MCF 10A (cell line): ENCODE measurements at regions of chr4 and their contacts with region 1.

Region 1: GRCh38 chr4:15001869-15002658 is at the start of gene CPEB2:
- DNase-seq: peak; percentile 92
- H3K4me3 Mint-ChIP-seq: peak within 1 kb of the TSS; percentile 89
- H3K27ac Mint-ChIP-seq: peak within 1 kb of the TSS; percentile 95
- H3K4me1 Mint-ChIP-seq: peaks cover 7% of the 10 kb centered on the region
- H3K27me3 Mint-ChIP-seq: no peaks in the 10 kb centered on the region
- CTCF ChIP-seq: no peak
- total RNA-seq, gene CPEB2: 13.8 and 21.8 TPM in 2 replicates

Region 2: DNA sequence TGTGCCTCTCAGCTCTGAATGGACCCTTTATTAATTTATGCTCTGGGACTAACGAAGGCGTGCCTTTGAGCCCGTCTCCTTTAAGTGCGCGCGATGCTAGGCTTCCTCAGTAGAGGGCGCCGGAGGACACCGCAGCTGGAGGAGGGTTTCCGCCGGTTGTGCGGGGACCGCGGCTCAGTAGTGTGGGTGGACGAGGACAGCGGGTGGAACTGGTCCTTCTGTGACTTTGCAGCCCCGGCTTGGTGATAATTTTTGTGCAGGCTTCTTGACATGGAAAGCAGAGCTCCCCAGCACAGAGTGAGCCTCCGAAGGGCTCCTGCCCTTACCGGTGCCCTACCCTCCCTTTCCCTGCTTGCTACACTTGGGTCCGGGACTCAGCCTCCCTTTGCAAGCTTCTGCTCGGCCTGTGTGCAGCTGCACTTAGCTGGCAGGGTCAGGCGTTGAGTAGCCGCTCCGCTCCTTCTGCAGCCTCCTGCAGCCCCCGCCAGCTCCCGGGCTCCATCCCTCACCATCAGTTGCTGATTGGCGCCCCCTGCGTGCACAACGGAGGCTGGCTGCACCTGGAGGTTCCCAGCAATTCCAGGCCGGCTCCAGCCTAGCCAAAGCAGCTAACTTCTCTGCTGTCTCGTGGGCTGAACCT is 1347.8 kb before region 1 on chr4:
- CTCF ChIA-PET with region 1: interaction called, 11 read pairs
- POLR2A ChIA-PET with region 1: interaction called, 8 read pairs
- intact Hi-C with region 1: loop called (anchors 1 kb)
- DNase-seq: peak; percentile 78
- H3K4me3 Mint-ChIP-seq: peak overlapping the region; percentile 72
- H3K27ac Mint-ChIP-seq: no peak overlapping the region
- H3K4me1 Mint-ChIP-seq: peaks cover 9% of the 10 kb centered on the region
- H3K27me3 Mint-ChIP-seq: no peaks in the 10 kb centered on the region
- CTCF ChIP-seq: peak; percentile 61

Region 3: DNA sequence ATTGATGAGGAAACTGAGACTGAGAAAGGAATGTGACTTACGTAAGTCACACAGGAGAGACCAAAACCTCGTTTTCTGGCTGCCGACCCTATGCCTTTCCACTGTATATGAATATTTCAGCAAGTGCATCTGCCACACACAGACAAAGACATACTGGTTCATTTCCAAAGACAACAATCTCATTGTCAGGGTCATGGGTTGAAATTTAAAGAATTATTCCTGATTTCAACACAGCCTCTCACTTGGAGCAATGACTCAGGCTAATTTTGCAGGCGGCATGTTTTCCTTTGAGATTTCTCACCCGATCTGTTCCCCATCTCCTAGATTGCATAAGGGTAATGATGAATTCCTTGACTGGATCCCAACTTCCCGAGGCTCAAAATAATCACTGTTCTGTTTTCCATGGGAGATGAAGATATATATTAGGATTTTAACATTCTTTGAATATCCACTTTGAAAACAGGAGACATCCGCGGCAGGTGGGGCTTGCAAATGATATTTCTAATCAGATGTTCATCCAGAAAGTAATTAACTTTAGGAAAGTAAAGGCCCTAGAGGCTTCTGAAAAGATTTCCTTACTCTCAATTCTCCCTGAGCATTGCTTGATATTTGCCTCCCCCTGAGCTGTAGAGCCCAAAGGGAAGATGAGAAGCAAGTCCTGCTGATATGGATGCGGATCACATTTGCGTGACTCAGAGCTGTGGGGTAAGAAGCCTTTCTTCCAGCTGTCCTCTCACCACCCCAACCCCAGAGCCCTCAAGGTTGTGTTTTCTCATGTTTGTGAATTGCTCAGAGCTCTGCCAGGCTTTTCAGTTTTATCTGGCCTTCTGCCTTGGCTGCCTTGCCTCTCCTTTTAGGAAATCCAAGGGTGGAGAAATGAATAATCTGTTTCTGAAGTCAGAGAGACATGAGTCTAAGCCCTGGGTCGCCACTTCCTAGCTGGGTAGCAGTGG is 1013.4 kb before region 1 on chr4:
- CTCF ChIA-PET with region 1: no interaction called
- POLR2A ChIA-PET with region 1: interaction called, 3 read pairs
- intact Hi-C with region 1: loop called (anchors 1 kb)
- DNase-seq: peak; percentile 98
- H3K4me3 Mint-ChIP-seq: peak overlapping the region; percentile 21
- H3K27ac Mint-ChIP-seq: peak overlapping the region; percentile 75
- H3K4me1 Mint-ChIP-seq: peaks cover 39% of the 10 kb centered on the region
- H3K27me3 Mint-ChIP-seq: peaks cover 13% of the 10 kb centered on the region
- CTCF ChIP-seq: no peak

Region 4: GRCh38 chr4:14338585-14339265 is 663.3 kb before region 1 on chr4:
- CTCF ChIA-PET with region 1: no interaction called
- POLR2A ChIA-PET with region 1: no interaction called
- intact Hi-C with region 1: no loop called
- DNase-seq: no peak
- H3K4me3 Mint-ChIP-seq: no peak overlapping the region
- H3K27ac Mint-ChIP-seq: no peak overlapping the region
- H3K4me1 Mint-ChIP-seq: peaks cover 17% of the 10 kb centered on the region
- H3K27me3 Mint-ChIP-seq: no peaks in the 10 kb centered on the region
- CTCF ChIP-seq: no peak

Region 5: GRCh38 chr4:14771094-14771493 is 231.0 kb before region 1 on chr4:
- CTCF ChIA-PET with region 1: no interaction called
- POLR2A ChIA-PET with region 1: interaction called, 22 read pairs
- intact Hi-C with region 1: no loop called
- DNase-seq: peak; percentile 89
- H3K4me3 Mint-ChIP-seq: no peak overlapping the region
- H3K27ac Mint-ChIP-seq: peak overlapping the region; percentile 81
- H3K4me1 Mint-ChIP-seq: peaks cover 13% of the 10 kb centered on the region
- H3K27me3 Mint-ChIP-seq: no peaks in the 10 kb centered on the region
- CTCF ChIP-seq: no peak

Region 6: GRCh38 chr4:14916554-14917297 is 85.3 kb before region 1 on chr4:
- CTCF ChIA-PET with region 1: no interaction called
- POLR2A ChIA-PET with region 1: interaction called, 7 read pairs
- intact Hi-C with region 1: loop called (anchors 5 kb)
- DNase-seq: peak; percentile 66
- H3K4me3 Mint-ChIP-seq: no peak overlapping the region
- H3K27ac Mint-ChIP-seq: peak overlapping the region; percentile 1
- H3K4me1 Mint-ChIP-seq: peaks cover 10% of the 10 kb centered on the region
- H3K27me3 Mint-ChIP-seq: no peaks in the 10 kb centered on the region
- CTCF ChIP-seq: no peak

Region 7: GRCh38 chr4:14990484-14990883 is 11.6 kb before region 1 on chr4:
- CTCF ChIA-PET with region 1: no interaction called
- POLR2A ChIA-PET with region 1: interaction called, 22 read pairs
- intact Hi-C with region 1: no loop called
- DNase-seq: no peak
- H3K4me3 Mint-ChIP-seq: no peak overlapping the region
- H3K27ac Mint-ChIP-seq: no peak overlapping the region
- H3K4me1 Mint-ChIP-seq: peaks cover 12% of the 10 kb centered on the region
- H3K27me3 Mint-ChIP-seq: no peaks in the 10 kb centered on the region
- CTCF ChIP-seq: no peak